Endothelial cell of umbilical vein (primary cell): ENCODE measurements at regions of chr9 and their contacts with region 1.

Region 1: DNA sequence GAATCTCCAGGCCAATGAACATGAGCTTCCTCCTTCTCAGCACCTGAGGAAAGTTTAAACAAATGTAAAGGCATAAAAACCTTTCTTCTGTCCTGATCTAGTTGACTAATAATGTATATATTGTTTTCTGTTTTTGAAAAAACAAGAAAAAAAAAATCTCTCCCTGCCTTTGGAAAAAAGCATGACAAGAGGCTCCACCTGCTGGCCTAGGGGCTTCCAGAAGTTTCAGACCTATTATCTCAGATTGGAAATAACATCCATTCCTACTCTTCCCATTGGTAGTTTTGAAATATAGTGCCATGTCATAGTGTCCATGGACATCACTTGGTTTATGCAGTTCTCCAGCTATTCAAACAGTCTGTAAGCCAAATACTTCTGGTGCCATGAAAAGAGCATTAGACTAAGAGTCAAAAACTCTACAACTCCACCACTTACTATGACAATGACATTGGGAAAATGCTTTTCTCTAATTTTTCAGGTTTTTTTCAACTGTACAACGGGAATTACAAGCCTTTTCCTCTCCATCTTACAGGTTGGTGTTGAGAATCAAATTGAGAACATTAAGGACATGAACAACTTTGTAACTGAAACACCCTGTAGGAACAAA is 409.6 kb upstream of the MPDZ start:
- DNase-seq: peak; percentile 67
- H3K4me3 ChIP-seq: no peak overlapping the region
- H3K27ac ChIP-seq: no peak overlapping the region
- H3K4me1 ChIP-seq: peaks cover 4% of the 10 kb centered on the region
- H3K27me3 ChIP-seq: no peaks in the 10 kb centered on the region
- CTCF ChIP-seq: peak; percentile 37 to 46
- POLR2A ChIP-seq: no peak

Region 2: DNA sequence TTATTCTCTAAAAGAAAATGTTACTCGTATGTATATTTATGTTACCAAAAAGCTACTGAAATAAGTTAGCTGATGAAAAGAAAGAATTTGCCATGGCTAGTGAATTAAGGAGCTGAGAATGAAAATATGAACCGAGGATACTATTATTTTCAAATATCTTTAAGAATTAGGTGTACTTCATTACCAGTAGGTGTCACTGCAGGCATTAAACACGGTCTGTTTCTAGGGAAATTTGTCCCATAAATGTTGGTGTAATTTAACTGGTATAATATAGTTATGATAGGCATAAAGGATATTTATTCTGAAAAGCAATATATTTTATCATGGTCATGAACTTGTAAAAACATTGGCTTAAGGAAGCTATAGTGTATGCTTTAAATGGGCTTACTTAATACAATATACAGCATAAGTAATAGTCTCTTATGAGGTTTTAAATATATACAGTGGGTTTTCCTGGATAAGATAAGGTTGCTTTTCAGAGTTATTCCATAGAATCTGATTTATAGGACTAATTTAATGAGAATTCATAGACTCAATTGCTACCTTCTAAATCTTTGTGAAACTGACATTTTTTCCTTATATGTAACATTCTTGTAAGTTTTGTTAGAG is 337.2 kb before region 1 on chr9:
- CTCF ChIA-PET with region 1: interaction called, 3 read pairs
- POLR2A ChIA-PET with region 1: no interaction called
- dilution Hi-C with region 1: no loop called
- intact Hi-C with region 1: loop called (anchors 5 kb)
- DNase-seq: peak; percentile 74
- H3K4me3 ChIP-seq: no peak overlapping the region
- H3K27ac ChIP-seq: no peak overlapping the region
- H3K4me1 ChIP-seq: no peaks in the 10 kb centered on the region
- H3K27me3 ChIP-seq: no peaks in the 10 kb centered on the region
- CTCF ChIP-seq: peak; percentile 32 to 37
- POLR2A ChIP-seq: no peak

Region 3: GRCh38 chr9:13414349-13414748 is 274.7 kb before region 1 on chr9:
- CTCF ChIA-PET with region 1: no interaction called
- POLR2A ChIA-PET with region 1: no interaction called
- dilution Hi-C with region 1: no loop called
- intact Hi-C with region 1: no loop called
- DNase-seq: no peak
- H3K4me3 ChIP-seq: no peak overlapping the region
- H3K27ac ChIP-seq: no peak overlapping the region
- H3K4me1 ChIP-seq: no peaks in the 10 kb centered on the region
- H3K27me3 ChIP-seq: peaks cover 0 to 2% of the 10 kb centered on the region in 2 experiments
- CTCF ChIP-seq: no peak
- POLR2A ChIP-seq: no peak

Region 4: GRCh38 chr9:13446938-13447842 is 241.9 kb before region 1 on chr9:
- CTCF ChIA-PET with region 1: interaction called, 8 read pairs
- POLR2A ChIA-PET with region 1: no interaction called
- dilution Hi-C with region 1: no loop called
- intact Hi-C with region 1: loop called (anchors 5 kb)
- DNase-seq: peak; percentile 63
- H3K4me3 ChIP-seq: peak overlapping the region in 1 of 3 experiments; percentile 18
- H3K27ac ChIP-seq: no peak overlapping the region
- H3K4me1 ChIP-seq: peaks cover 14% of the 10 kb centered on the region
- H3K27me3 ChIP-seq: no peaks in the 10 kb centered on the region
- CTCF ChIP-seq: no peak
- POLR2A ChIP-seq: no peak

Region 5: DNA sequence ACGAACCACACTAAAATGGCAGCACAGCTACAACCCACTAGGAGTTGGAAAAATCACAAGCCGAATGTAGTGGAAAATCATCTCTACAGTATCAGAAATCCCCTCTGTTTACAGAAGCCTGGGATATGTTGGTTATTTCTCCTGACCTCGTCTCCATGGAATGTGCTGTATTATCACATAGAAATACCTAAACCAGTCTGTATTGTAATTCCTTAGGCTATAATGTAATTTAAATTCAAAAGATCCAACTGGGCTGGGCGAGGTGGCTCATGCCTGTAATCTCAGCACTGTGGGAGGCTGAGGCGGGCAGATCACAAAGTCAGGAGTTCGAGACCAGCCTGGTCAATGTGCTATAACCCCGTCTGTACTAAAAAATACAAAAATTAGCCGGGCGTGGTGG is 164.9 kb before region 1 on chr9:
- CTCF ChIA-PET with region 1: no interaction called
- POLR2A ChIA-PET with region 1: no interaction called
- dilution Hi-C with region 1: no loop called
- intact Hi-C with region 1: loop called (anchors 5 kb)
- DNase-seq: no peak
- H3K4me3 ChIP-seq: no peak overlapping the region
- H3K27ac ChIP-seq: no peak overlapping the region
- H3K4me1 ChIP-seq: peaks cover 18% of the 10 kb centered on the region
- H3K27me3 ChIP-seq: no peaks in the 10 kb centered on the region
- CTCF ChIP-seq: no peak
- POLR2A ChIP-seq: no peak

Region 6: GRCh38 chr9:13575558-13575957 is 113.5 kb before region 1 on chr9:
- CTCF ChIA-PET with region 1: no interaction called
- POLR2A ChIA-PET with region 1: no interaction called
- dilution Hi-C with region 1: no loop called
- intact Hi-C with region 1: loop called (anchors 1 kb)
- DNase-seq: peak; percentile 95
- H3K4me3 ChIP-seq: no peak overlapping the region
- H3K27ac ChIP-seq: peak overlapping the region; percentile 89
- H3K4me1 ChIP-seq: peaks cover 23% of the 10 kb centered on the region
- H3K27me3 ChIP-seq: no peaks in the 10 kb centered on the region
- CTCF ChIP-seq: no peak
- POLR2A ChIP-seq: no peak